ENCODE measurements at regions of chr14 and their contacts with region 1.

Region 1: DNA sequence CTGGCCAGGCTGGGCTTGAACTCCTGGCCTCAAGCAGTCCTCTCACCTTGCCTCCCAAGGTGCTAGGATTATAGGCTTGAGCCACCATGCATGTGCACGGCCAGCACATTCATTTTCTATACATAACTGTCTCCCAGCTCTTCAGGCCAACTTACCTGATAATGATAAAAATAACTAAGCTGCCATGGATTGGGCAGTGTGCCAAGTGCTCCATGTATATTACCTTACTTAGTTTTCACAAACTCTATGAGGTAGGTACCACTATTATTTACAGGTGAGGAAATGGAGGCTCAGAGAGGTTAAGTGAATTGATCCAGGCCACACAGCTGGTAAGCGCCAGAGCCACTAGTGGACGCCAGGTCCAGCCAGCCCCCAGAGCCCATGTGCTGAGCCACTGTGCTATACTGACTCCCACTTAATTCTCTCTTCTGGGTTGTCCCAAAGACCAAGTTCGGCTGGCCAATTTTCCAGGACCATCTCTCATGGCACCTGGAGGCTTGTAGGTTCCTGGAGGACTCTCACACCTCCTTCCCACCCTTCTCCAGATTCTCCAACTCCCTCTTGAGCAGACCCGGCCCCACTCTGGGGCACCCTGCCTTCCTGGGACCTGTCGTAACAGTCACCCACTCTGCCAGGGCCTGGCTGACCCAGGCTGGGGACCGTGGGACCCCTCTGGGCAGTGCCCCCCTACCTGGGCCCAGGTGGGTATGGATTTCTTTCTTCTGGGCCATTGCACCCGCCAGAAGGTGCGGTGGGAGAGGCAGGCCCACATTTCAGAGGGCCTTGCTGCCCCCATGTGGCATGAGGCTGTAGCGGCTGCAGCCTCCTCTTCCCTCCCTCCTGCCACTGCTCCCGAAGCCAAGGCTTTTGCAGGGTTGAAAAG is 30.2 kb upstream of the CIPC start:
- DNase-seq: peak; percentile 77
- H3K4me3 ChIP-seq: no peak overlapping the region
- H3K27ac ChIP-seq: no peak overlapping the region
- H3K4me1 ChIP-seq: peaks cover 23% of the 10 kb centered on the region
- H3K27me3 ChIP-seq: no peaks in the 10 kb centered on the region
- CTCF ChIP-seq: peak; percentile 53 to 83 (median 69)
- POLR2A ChIP-seq: no peak

Region 2: GRCh38 chr14:76876076-76876475 is 191.8 kb before region 1 on chr14:
- intact Hi-C with region 1: loop called (anchors 5 kb)
- DNase-seq: peak; percentile 79
- H3K4me3 ChIP-seq: no peak overlapping the region
- H3K27ac ChIP-seq: no peak overlapping the region
- H3K4me1 ChIP-seq: no peaks in the 10 kb centered on the region
- H3K27me3 ChIP-seq: no peaks in the 10 kb centered on the region
- CTCF ChIP-seq: peak; percentile 84 to 85 (median 84)
- POLR2A ChIP-seq: no peak

Region 3: DNA sequence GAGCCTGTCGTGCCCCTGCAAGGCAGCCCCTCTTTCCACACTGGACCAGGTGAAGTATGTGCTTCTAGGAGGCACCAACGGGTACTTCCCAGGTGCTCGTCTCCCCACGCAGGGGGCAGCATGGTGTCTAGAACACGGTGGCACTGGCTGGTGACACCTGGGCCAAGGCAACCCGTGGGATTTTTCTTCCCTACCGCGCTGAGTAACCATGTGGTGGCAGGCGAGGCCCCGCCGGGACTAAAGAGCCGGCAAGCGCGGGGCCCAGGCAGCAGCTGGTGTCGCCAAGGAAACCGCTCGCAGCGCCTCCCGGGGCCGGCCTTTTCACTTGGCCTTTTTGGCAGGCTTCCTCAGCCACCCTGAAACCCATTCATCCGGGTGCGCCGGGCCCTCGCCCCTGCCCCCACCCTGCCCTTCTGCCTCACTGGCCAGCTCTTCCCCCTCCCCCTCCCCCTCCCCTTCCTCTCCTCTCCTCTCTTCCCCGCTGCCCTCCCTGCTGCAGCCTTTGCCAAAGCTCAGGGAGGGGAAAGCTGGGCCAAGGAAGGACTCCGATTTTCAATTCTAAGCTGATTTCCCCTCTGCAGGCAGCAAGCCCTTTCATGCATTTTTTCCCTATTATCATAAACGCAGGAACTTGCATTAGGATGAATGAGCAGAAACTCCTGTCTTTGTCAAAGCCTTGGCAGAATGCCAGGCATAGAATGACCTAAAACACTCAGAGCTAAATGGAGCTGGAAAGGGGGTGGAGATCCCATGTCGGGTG is 120.6 kb before region 1 on chr14:
- intact Hi-C with region 1: no loop called
- DNase-seq: peak; percentile 90
- H3K4me3 ChIP-seq: peak overlapping the region in 1 of 2 donors; percentile 9
- H3K27ac ChIP-seq: peak overlapping the region; percentile 57 to 68
- H3K4me1 ChIP-seq: peaks cover 32% of the 10 kb centered on the region
- H3K27me3 ChIP-seq: no peaks in the 10 kb centered on the region
- CTCF ChIP-seq: peak in 2 of 3 experiments; percentile 21 to 36
- POLR2A ChIP-seq: no peak

Region 4: GRCh38 chr14:77097700-77098528 is 30.0 kb after region 1 on chr14 and contains the start of gene CIPC:
- intact Hi-C with region 1: no loop called
- DNase-seq: peak; percentile 100
- H3K4me3 ChIP-seq: peak within 1 kb of the TSS; percentile 83 to 97
- H3K27ac ChIP-seq: peak within 1 kb of the TSS; percentile 98
- H3K4me1 ChIP-seq: peaks cover 31% of the 10 kb centered on the region
- H3K27me3 ChIP-seq: no peaks in the 10 kb centered on the region
- CTCF ChIP-seq: peak in 2 of 3 experiments; percentile 28
- POLR2A ChIP-seq: peak; percentile 78
- total RNA-seq, gene CIPC: 44.5 to 48.3 TPM